Panc1 (cell line): ENCODE measurements at regions of chr1 and their contacts with region 1.

Region 1: DNA sequence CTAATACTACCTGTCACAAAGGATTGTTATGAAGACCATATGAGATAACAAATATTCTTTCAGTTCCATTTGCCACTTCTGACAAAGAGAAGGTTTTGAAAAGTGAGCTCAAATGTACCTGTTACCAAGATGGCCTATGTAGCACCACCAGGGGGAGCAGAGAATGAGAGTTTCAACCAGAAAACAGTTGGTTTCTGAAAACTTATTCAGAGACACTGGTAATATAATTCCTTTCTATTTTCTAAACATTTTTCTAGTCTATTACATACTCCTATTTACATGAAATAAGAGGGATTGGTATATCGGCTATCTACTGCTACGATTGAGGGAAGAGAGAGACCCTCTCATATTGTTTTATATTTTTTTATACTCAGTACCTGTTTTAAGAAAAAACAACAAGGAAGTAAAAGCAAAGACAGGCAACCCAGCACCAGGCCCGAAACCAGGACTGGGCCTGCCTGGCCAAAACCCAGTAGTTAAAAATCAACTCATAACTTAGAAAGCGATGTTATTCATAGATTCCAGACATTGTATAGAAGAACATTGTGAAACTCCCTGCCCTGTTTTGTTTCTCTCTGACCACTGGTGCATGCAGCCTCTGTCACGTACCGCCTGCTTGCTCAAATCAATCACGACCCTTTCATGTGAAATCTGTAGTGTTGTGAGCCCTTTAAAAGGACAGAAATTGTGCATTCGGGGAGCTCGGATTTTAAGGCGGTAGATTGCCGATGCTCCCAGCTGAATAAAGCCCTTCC is 48.3 kb downstream of the IL23R start:
- DNase-seq: no peak
- ATAC-seq: peak; percentile 68; the same call in 1 of the 2 replicates
- H3K4me3 ChIP-seq: no peak overlapping the region
- H3K27ac ChIP-seq: no peak overlapping the region
- H3K4me1 ChIP-seq: no peaks in the 10 kb centered on the region
- H3K27me3 ChIP-seq: peaks cover 6% of the 10 kb centered on the region; the same call in 1 of the 2 replicates
- CTCF ChIP-seq: peak; percentile 59

Region 2: DNA sequence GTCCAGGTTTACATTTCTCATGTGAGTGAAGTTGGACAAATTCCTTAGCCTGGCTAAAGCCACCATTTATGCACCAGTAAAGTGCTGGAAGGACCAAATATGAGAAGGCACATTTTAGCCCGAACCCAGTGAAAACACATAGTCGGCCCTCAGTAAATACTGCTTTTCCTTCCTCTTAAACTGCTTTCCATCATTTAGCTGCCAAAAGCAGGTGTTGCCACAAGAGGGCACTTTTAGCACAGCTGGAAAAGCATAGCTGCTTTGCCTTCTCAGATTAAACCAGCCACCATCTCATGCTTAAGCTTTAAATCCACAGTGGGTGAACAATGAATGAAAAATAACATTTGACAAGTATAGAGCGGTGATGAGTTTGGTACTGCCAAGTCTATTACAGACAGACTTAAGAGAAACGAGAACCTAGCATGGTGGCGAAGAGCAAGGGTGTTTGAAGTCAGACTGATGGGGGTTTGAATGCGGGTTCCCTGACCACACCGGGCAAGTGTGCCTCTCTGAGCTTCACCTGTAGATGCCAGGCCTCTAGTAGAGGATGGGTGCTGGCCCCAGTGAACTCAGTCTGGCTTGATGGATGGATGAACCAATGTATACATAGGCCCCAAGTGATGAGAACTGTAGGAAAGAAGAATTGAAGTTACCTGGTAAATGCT is 218.4 kb before region 1 on chr1:
- CTCF ChIA-PET with region 1: interaction called, 11 read pairs
- POLR2A ChIA-PET with region 1: no interaction called
- in situ Hi-C with region 1: no loop called
- intact Hi-C with region 1: loop called (anchors 5 kb)
- DNase-seq: peak; percentile 71
- ATAC-seq: peak; percentile 87
- H3K4me3 ChIP-seq: no peak overlapping the region
- H3K27ac ChIP-seq: no peak overlapping the region
- H3K4me1 ChIP-seq: no peaks in the 10 kb centered on the region
- H3K27me3 ChIP-seq: no peaks in the 10 kb centered on the region
- CTCF ChIP-seq: peak; percentile 88

Region 3: GRCh38 chr1:67274623-67275325 is 60.2 kb after region 1 on chr1:
- CTCF ChIA-PET with region 1: no interaction called
- POLR2A ChIA-PET with region 1: no interaction called
- in situ Hi-C with region 1: no loop called
- intact Hi-C with region 1: loop called (anchors 10 kb)
- DNase-seq: no peak
- ATAC-seq: no peak
- H3K4me3 ChIP-seq: no peak overlapping the region
- H3K27ac ChIP-seq: no peak overlapping the region
- H3K4me1 ChIP-seq: no peaks in the 10 kb centered on the region
- H3K27me3 ChIP-seq: no peaks in the 10 kb centered on the region
- CTCF ChIP-seq: no peak

Region 4: GRCh38 chr1:67307251-67308060 is 92.9 kb after region 1 on chr1 and contains the start of gene IL12RB2:
- CTCF ChIA-PET with region 1: no interaction called
- POLR2A ChIA-PET with region 1: no interaction called
- in situ Hi-C with region 1: no loop called
- intact Hi-C with region 1: no loop called
- DNase-seq: no peak
- ATAC-seq: peak; percentile 85
- H3K4me3 ChIP-seq: peak within 1 kb of the TSS; percentile 29 to 54
- H3K27ac ChIP-seq: no peak within 1 kb of the TSS
- H3K4me1 ChIP-seq: 0 out of 2 replicates have a peak, but pooled peaks cover 3% of the 10 kb centered on the region
- H3K27me3 ChIP-seq: peaks cover 17% of the 10 kb centered on the region
- CTCF ChIP-seq: no peak
- total RNA-seq, gene IL12RB2: 0.26 TPM

Region 5: GRCh38 chr1:67376381-67376780 is 161.8 kb after region 1 on chr1:
- CTCF ChIA-PET with region 1: no interaction called
- POLR2A ChIA-PET with region 1: no interaction called
- in situ Hi-C with region 1: no loop called
- intact Hi-C with region 1: no loop called
- DNase-seq: no peak
- ATAC-seq: no peak
- H3K4me3 ChIP-seq: no peak overlapping the region
- H3K27ac ChIP-seq: no peak overlapping the region
- H3K4me1 ChIP-seq: no peaks in the 10 kb centered on the region
- H3K27me3 ChIP-seq: no peaks in the 10 kb centered on the region
- CTCF ChIP-seq: no peak